WTC11 (cell line): ENCODE measurements at regions of chr15 and their contacts with region 1.

Region 1: GRCh38 chr15:47473832-47474231 is 243.5 kb upstream of the SEMA6D start:
- DNase-seq: no peak
- ATAC-seq: no peak
- H3K4me3 Mint-ChIP-seq: no peak overlapping the region
- H3K27ac Mint-ChIP-seq: no peak overlapping the region
- H3K4me1 Mint-ChIP-seq: peaks cover 8% of the 10 kb centered on the region
- H3K27me3 Mint-ChIP-seq: no peaks in the 10 kb centered on the region
- CTCF ChIP-seq: no peak

Region 2: DNA sequence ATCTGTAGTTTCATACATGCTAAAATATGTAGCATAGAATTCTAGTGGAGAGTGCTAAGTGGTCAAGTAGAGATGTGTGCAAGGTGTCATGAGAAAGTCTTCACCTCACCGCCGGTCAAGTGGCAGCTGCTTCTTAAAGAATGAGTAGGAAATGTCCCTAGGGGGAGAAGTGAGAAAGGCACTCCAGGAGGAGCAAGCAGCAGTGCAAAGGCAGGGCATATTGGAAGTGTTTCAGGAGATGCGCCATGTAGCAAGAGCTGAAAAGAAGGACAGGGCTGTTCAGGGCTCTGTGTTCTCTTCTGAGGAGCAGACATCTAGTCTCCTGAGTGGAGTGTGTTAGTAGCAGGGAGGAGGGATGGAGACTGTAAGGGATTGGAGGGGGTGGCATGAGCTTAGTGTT is 69.0 kb before region 1 on chr15:
- CTCF ChIA-PET with region 1: interaction called, 13 read pairs
- POLR2A ChIA-PET with region 1: no interaction called
- DNase-seq: no peak
- ATAC-seq: peak; percentile 40
- H3K4me3 Mint-ChIP-seq: no peak overlapping the region
- H3K27ac Mint-ChIP-seq: no peak overlapping the region
- H3K4me1 Mint-ChIP-seq: peaks cover 64% of the 10 kb centered on the region
- H3K27me3 Mint-ChIP-seq: no peaks in the 10 kb centered on the region; the same call in none of the 2 replicates
- CTCF ChIP-seq: no peak

Region 3: GRCh38 chr15:47422901-47423665 is 50.7 kb before region 1 on chr15:
- CTCF ChIA-PET with region 1: no interaction called
- POLR2A ChIA-PET with region 1: no interaction called
- DNase-seq: no peak
- ATAC-seq: no peak
- H3K4me3 Mint-ChIP-seq: no peak overlapping the region
- H3K27ac Mint-ChIP-seq: no peak overlapping the region
- H3K4me1 Mint-ChIP-seq: no peaks in the 10 kb centered on the region; the same call in 1 of the 2 replicates
- H3K27me3 Mint-ChIP-seq: no peaks in the 10 kb centered on the region
- CTCF ChIP-seq: no peak

Region 4: GRCh38 chr15:47514211-47514652 is 40.4 kb after region 1 on chr15:
- CTCF ChIA-PET with region 1: no interaction called
- POLR2A ChIA-PET with region 1: no interaction called
- DNase-seq: no peak
- ATAC-seq: no peak
- H3K4me3 Mint-ChIP-seq: no peak overlapping the region
- H3K27ac Mint-ChIP-seq: no peak overlapping the region
- H3K4me1 Mint-ChIP-seq: peaks cover 2% of the 10 kb centered on the region; the same call in 1 of the 2 replicates
- H3K27me3 Mint-ChIP-seq: no peaks in the 10 kb centered on the region
- CTCF ChIP-seq: no peak

Region 5: GRCh38 chr15:47603026-47603425 is 129.2 kb after region 1 on chr15:
- CTCF ChIA-PET with region 1: no interaction called
- POLR2A ChIA-PET with region 1: no interaction called
- DNase-seq: no peak
- ATAC-seq: no peak
- H3K4me3 Mint-ChIP-seq: no peak overlapping the region
- H3K27ac Mint-ChIP-seq: no peak overlapping the region
- H3K4me1 Mint-ChIP-seq: peaks cover 31% of the 10 kb centered on the region
- H3K27me3 Mint-ChIP-seq: no peaks in the 10 kb centered on the region
- CTCF ChIP-seq: no peak

Region 6: GRCh38 chr15:47717036-47717611 is 243.3 kb after region 1 on chr15 and contains the start of gene SEMA6D:
- CTCF ChIA-PET with region 1: interaction called, 13 read pairs
- POLR2A ChIA-PET with region 1: no interaction called
- DNase-seq: peak; percentile 76
- ATAC-seq: peak; percentile 76
- H3K4me3 Mint-ChIP-seq: peak within 1 kb of the TSS; percentile 92
- H3K27ac Mint-ChIP-seq: peak within 1 kb of the TSS; percentile 84
- H3K4me1 Mint-ChIP-seq: peaks cover 54% of the 10 kb centered on the region
- H3K27me3 Mint-ChIP-seq: peaks cover 56% of the 10 kb centered on the region
- CTCF ChIP-seq: no peak
- total RNA-seq, gene SEMA6D: 0.98 to 2.6 TPM (median 2.0 TPM) in 3 replicates

Region 7: GRCh38 chr15:47736143-47736786 is 262.4 kb after region 1 on chr15:
- CTCF ChIA-PET with region 1: no interaction called
- POLR2A ChIA-PET with region 1: no interaction called
- DNase-seq: no peak
- ATAC-seq: peak; percentile 62; the same call in 1 of the 2 replicates
- H3K4me3 Mint-ChIP-seq: no peak overlapping the region
- H3K27ac Mint-ChIP-seq: no peak overlapping the region
- H3K4me1 Mint-ChIP-seq: peaks cover 30% of the 10 kb centered on the region
- H3K27me3 Mint-ChIP-seq: peaks cover 33% of the 10 kb centered on the region
- CTCF ChIP-seq: no peak